ENCODE measurements at regions of chr17 and their contacts with region 1.

Region 1: GRCh38 chr17:1095090-1095852 is 84.5 kb downstream of the ABR start:
- DNase-seq: no peak
- ATAC-seq: no peak
- H3K4me3 Mint-ChIP-seq: no peak overlapping the region
- H3K27ac Mint-ChIP-seq: no peak overlapping the region
- H3K4me1 Mint-ChIP-seq: peaks cover 23% of the 10 kb centered on the region
- H3K27me3 Mint-ChIP-seq: no peaks in the 10 kb centered on the region
- CTCF ChIP-seq: no peak

Region 2: DNA sequence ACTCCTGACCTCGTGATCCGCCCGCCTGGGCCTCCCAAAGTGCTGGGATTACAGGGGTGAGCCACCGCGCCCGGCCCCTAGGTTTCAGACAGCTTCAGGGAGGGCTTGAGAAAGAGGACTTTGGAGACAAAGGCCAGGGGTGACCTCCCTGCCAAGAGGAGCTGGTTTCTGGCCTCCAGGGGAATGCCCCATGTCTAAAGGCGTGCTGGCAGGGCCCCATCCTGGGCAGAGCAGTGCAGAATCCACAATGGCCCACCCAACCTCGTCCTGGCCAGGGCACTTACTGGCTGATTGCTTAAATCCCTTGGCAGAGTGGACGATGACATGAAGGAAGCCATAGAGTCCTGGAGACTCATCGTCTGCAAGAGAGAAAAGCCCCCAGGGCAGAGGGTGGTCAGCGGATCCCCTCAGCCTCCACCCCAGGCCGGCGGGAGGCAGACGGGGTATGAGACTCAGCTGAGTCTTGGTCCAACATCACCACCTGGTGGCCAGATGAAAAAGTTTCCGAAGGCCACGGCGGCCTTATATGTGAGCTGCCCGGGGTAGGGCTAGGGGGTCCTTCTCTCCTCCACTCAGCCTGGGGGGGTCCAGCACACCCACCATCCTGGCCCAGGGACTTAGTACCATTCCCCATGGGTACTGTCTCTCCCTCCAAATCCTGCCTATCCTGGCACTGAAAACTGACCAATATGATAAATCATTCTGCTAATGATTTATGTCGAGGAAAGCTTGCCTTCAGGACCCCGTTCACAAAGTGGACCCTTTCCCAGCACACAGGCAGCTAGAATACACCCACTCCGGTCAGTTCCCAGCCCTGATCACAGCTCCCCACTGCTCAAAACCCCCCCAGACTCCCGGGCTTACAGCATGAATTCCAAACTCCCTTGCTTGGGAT is 39.3 kb before region 1 on chr17:
- CTCF ChIA-PET with region 1: interaction called, 11 read pairs
- POLR2A ChIA-PET with region 1: no interaction called
- intact Hi-C with region 1: no loop called
- DNase-seq: peak; percentile 69
- ATAC-seq: peak; percentile 77
- H3K4me3 Mint-ChIP-seq: no peak overlapping the region
- H3K27ac Mint-ChIP-seq: no peak overlapping the region
- H3K4me1 Mint-ChIP-seq: peaks cover 2% of the 10 kb centered on the region
- H3K27me3 Mint-ChIP-seq: no peaks in the 10 kb centered on the region
- CTCF ChIP-seq: peak; percentile 76

Region 3: GRCh38 chr17:1197781-1198490 is 102.7 kb after region 1 on chr17:
- CTCF ChIA-PET with region 1: no interaction called
- POLR2A ChIA-PET with region 1: no interaction called
- intact Hi-C with region 1: no loop called
- DNase-seq: peak; percentile 86
- ATAC-seq: peak; percentile 58
- H3K4me3 Mint-ChIP-seq: peak overlapping the region; percentile 35
- H3K27ac Mint-ChIP-seq: peak overlapping the region; percentile 88
- H3K4me1 Mint-ChIP-seq: peaks cover 50% of the 10 kb centered on the region
- H3K27me3 Mint-ChIP-seq: no peaks in the 10 kb centered on the region
- CTCF ChIP-seq: no peak

Measured in activated CD8-positive, alpha-beta T cell treated with anti-CD3 and anti-CD28 coated beads for 36 hours (primary cell).